ENCODE measurements at regions of chr7 and their contacts with region 1.

Region 1: DNA sequence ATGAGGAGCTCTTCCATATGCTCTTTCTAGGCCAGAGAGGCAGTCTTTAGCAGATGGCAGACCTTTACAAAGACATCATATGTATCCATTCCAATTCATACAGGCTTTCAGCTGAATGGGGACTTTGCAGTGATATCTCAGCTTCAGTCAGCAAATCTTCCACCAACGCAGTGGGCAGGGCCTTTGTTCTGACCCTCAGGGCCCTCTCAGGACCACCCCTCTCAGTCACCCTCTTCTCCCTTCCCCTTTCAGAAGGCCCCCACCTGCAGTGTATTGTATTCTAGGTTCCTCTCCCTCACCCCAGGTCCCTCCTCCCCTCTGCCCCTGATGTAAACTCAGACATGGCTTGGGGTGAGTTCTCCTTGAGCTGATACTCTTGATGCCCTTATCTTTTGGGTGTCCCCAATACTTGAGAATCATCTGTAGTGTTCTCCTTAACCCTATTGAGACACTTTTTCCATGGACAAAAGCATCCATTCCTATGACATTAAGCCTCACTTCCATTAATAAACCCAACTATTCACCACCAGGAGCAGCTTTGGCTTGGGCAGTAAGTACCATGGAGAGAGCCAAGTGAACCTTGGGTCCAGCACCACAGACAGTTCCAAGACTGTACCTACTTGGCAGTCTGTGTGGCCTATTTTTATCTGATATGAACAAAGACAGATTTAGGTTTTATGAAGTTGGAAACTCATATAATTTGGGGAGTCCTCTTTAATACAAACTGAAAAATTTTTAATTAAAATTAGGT is 62.7 kb downstream of the ADCYAP1R1 start:
- DNase-seq: no peak
- ATAC-seq: peak in 3 of 4 donors; percentile 46 to 70 (median 51)
- H3K4me3 ChIP-seq: no peak overlapping the region
- H3K27ac ChIP-seq: no peak overlapping the region
- H3K4me1 ChIP-seq: no peaks in the 10 kb centered on the region
- H3K27me3 ChIP-seq: no peaks in the 10 kb centered on the region
- CTCF ChIP-seq: no peak
- POLR2A ChIP-seq: no peak

Region 2: GRCh38 chr7:31043051-31043471 is 71.7 kb before region 1 on chr7:
- intact Hi-C with region 1: no loop called
- DNase-seq: no peak
- ATAC-seq: no peak
- H3K4me3 ChIP-seq: no peak overlapping the region
- H3K27ac ChIP-seq: no peak overlapping the region
- H3K4me1 ChIP-seq: no peaks in the 10 kb centered on the region
- H3K27me3 ChIP-seq: no peaks in the 10 kb centered on the region
- CTCF ChIP-seq: no peak
- POLR2A ChIP-seq: no peak

Region 3: GRCh38 chr7:31175672-31176071 is 60.9 kb after region 1 on chr7:
- intact Hi-C with region 1: loop called in 1 of 2 experiments (anchors 10 kb)
- DNase-seq: no peak
- ATAC-seq: peak in 1 of 4 donors; percentile 25
- H3K4me3 ChIP-seq: no peak overlapping the region
- H3K27ac ChIP-seq: no peak overlapping the region
- H3K4me1 ChIP-seq: no peaks in the 10 kb centered on the region
- H3K27me3 ChIP-seq: no peaks in the 10 kb centered on the region
- CTCF ChIP-seq: peak in 2 of 4 donors; percentile 9 to 12
- POLR2A ChIP-seq: no peak

Measured in right lobe of liver (tissue), 6 donors.